Posterior vena cava (tissue), 2 donors: ENCODE measurements at regions of chr7 and their contacts with region 1.

Region 1: DNA sequence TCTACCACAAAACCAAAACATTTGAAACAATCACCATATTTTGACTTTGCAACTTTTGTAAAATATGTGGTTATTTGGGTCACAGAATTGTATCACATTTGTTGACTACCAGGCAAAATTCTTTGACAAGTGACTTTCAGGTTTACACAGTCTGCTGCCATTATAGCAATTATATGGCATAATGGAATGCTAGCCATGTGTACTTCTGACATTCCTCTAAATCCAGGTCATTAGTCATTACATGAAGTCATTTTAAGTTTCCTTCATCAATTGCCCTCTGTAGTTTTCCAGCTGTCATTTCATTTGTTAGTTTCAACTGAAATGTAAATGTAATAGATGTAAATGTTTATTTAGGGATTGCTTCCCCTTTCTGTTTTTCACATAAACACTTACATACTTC is 137.5 kb downstream of the IMMP2L start:
- DNase-seq: no peak

Region 2: GRCh38 chr7:110604885-110605284 is 819.9 kb before region 1 on chr7:
- intact Hi-C with region 1: loop called in 1 of 2 experiments (anchors 5 kb)
- DNase-seq: no peak

Region 3: GRCh38 chr7:111735661-111736551 is 311.1 kb after region 1 on chr7:
- intact Hi-C with region 1: loop called in 1 of 2 experiments (anchors 10 kb)
- DNase-seq: no peak